WTC11 (cell line): ENCODE measurements at regions of chr1 and their contacts with region 1.

Region 1: GRCh38 chr1:113978863-113979702 is at the start of gene OLFML3:
- DNase-seq: peak; percentile 85
- ATAC-seq: peak; percentile 79
- H3K4me3 Mint-ChIP-seq: peak within 1 kb of the TSS; percentile 64
- H3K27ac Mint-ChIP-seq: peak within 1 kb of the TSS; percentile 97
- H3K4me1 Mint-ChIP-seq: peaks cover 91% of the 10 kb centered on the region
- H3K27me3 Mint-ChIP-seq: no peaks in the 10 kb centered on the region
- CTCF ChIP-seq: peak; percentile 54
- total RNA-seq, gene OLFML3: 65.8 to 91.1 TPM (median 90.4 TPM) in 3 replicates

Region 2: GRCh38 chr1:113963281-113963906 is 15.7 kb before region 1 on chr1:
- CTCF ChIA-PET with region 1: interaction called, 13 read pairs
- POLR2A ChIA-PET with region 1: no interaction called
- DNase-seq: no peak
- ATAC-seq: no peak
- H3K4me3 Mint-ChIP-seq: no peak overlapping the region
- H3K27ac Mint-ChIP-seq: no peak overlapping the region
- H3K4me1 Mint-ChIP-seq: peaks cover 12% of the 10 kb centered on the region
- H3K27me3 Mint-ChIP-seq: no peaks in the 10 kb centered on the region
- CTCF ChIP-seq: no peak

Region 3: GRCh38 chr1:114009393-114009792 is 30.3 kb after region 1 on chr1:
- CTCF ChIA-PET with region 1: interaction called, 22 read pairs
- POLR2A ChIA-PET with region 1: no interaction called
- DNase-seq: no peak
- ATAC-seq: no peak
- H3K4me3 Mint-ChIP-seq: no peak overlapping the region
- H3K27ac Mint-ChIP-seq: no peak overlapping the region
- H3K4me1 Mint-ChIP-seq: peaks cover 30% of the 10 kb centered on the region
- H3K27me3 Mint-ChIP-seq: peaks cover 14% of the 10 kb centered on the region
- CTCF ChIP-seq: no peak

Region 4: GRCh38 chr1:114088392-114089299 is 109.6 kb after region 1 on chr1:
- CTCF ChIA-PET with region 1: interaction called, 27 read pairs
- POLR2A ChIA-PET with region 1: interaction called, 5 read pairs
- DNase-seq: peak; percentile 53
- ATAC-seq: peak; percentile 93
- H3K4me3 Mint-ChIP-seq: no peak overlapping the region
- H3K27ac Mint-ChIP-seq: peak overlapping the region; percentile 80
- H3K4me1 Mint-ChIP-seq: peaks cover 69% of the 10 kb centered on the region
- H3K27me3 Mint-ChIP-seq: peaks cover 11% of the 10 kb centered on the region
- CTCF ChIP-seq: no peak

Region 5: DNA sequence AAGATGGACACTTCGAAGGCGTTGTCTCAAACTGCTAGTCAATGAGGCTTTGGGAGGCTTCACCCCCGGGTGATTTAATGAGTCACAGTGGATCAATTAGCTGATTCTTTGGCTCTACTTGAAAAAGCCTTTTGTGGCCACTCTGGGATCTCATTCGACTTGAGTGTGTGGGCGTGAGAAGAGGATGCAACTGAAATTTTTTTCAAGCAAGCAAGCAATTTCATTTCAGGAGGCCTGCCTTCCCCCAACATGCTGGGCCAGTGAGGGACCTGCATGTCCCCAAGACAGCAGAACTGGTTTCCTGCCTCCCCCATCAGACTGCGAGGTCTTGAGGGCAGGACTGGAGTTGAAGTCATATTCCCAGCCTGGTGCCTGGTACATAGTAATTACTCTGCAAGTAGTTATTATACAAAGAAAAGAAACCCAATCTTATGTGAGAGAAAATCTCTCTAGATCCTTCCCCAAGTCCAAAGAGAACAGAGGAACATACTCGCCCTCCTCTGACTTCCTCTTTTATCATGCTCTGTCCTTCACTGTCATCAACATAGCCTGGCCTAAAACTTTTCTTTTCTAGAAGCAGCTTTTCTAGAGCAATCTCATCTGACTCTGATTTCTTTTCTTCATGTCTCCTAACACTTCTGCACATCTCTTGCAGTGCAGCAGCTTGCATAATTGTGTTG is 151.9 kb after region 1 on chr1:
- CTCF ChIA-PET with region 1: interaction called, 11 read pairs
- POLR2A ChIA-PET with region 1: no interaction called
- DNase-seq: no peak
- ATAC-seq: no peak
- H3K4me3 Mint-ChIP-seq: no peak overlapping the region
- H3K27ac Mint-ChIP-seq: no peak overlapping the region
- H3K4me1 Mint-ChIP-seq: peaks cover 41% of the 10 kb centered on the region
- H3K27me3 Mint-ChIP-seq: no peaks in the 10 kb centered on the region
- CTCF ChIP-seq: no peak

Region 6: GRCh38 chr1:114250683-114251572 is 271.8 kb after region 1 on chr1:
- CTCF ChIA-PET with region 1: interaction called, 10 read pairs
- POLR2A ChIA-PET with region 1: no interaction called
- DNase-seq: no peak
- ATAC-seq: no peak
- H3K4me3 Mint-ChIP-seq: no peak overlapping the region
- H3K27ac Mint-ChIP-seq: no peak overlapping the region
- H3K4me1 Mint-ChIP-seq: peaks cover 5% of the 10 kb centered on the region
- H3K27me3 Mint-ChIP-seq: peaks cover 21% of the 10 kb centered on the region
- CTCF ChIP-seq: no peak